GM12878 (cell line): ENCODE measurements at regions of chr3 and their contacts with region 1.

Region 1: GRCh38 chr3:47522082-47522987 is 8.8 kb upstream of the ELP6 start:
- DNase-seq: peak; percentile 69
- ATAC-seq: peak; percentile 99
- H3K4me3 ChIP-seq: no peak overlapping the region
- H3K27ac ChIP-seq: no peak overlapping the region
- H3K4me1 ChIP-seq: peaks cover 6% of the 10 kb centered on the region; the same call in 1 of the 2 replicates
- H3K27me3 ChIP-seq: no peaks in the 10 kb centered on the region; a peak in 1 of 4 replicates
- CTCF ChIP-seq: peak; percentile 84 to 94 (median 85); a peak in 5 of 6 replicates
- EP300 ChIP-seq: no peak
- POLR2A ChIP-seq: no peak
- RAD21 ChIP-seq: peak; percentile 97

Region 2: DNA sequence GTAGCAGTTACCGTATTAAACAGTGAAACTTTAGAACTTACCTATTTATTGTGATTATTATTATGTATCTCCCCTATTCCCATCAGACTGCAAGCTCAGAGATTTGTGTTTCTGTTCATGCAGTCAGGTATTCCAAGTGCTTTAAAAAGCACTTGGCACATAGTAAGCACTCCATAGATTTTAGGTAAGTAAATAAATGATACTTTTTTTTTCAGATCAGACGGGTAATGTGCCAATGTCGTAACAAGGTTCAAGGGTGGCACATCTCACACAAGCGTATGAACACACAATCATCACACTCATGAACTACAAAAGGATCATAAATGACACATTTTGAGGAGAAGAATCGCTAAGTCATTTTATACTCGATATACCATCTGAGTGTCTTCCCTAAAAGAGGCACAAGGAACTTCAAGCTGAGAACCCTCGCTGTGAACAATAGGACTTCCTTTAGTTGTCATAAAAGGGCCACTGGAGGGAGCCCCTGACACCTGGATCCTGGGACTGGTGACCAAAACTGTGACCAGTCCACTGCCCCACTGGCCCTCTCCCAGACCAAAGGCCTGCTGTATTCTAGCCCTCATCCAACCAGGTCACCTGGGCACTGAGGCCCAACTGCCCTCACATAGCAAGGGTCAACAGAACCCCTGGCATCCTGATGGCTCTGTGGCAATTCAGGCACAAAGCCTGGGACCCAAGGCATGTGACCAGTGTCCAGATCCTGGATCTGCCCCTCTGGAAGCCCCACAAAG is 271.9 kb before region 1 on chr3:
- CTCF ChIA-PET with region 1: no interaction called
- POLR2A ChIA-PET with region 1: no interaction called
- RAD21 ChIA-PET with region 1: no interaction called
- SMC1A ChIA-PET with region 1: no interaction called
- in situ Hi-C with region 1: no loop called
- intact Hi-C with region 1: no loop called
- DNase-seq: no peak
- ATAC-seq: peak; percentile 77
- H3K4me3 ChIP-seq: no peak overlapping the region
- H3K27ac ChIP-seq: no peak overlapping the region
- H3K4me1 ChIP-seq: no peaks in the 10 kb centered on the region
- H3K27me3 ChIP-seq: no peaks in the 10 kb centered on the region
- CTCF ChIP-seq: peak; percentile 43 to 59 (median 45); a peak in 5 of 6 replicates
- EP300 ChIP-seq: no peak
- POLR2A ChIP-seq: no peak
- RAD21 ChIP-seq: peak; percentile 51; the same call in 1 of the 2 replicates

Region 3: GRCh38 chr3:47533481-47533880 is 11.1 kb after region 1 on chr3:
- CTCF ChIA-PET with region 1: interaction called, 8 read pairs
- POLR2A ChIA-PET with region 1: no interaction called
- RAD21 ChIA-PET with region 1: interaction called, 7 read pairs
- SMC1A ChIA-PET with region 1: interaction called, 13 read pairs
- in situ Hi-C with region 1: no loop called
- intact Hi-C with region 1: no loop called
- DNase-seq: no peak
- ATAC-seq: peak; percentile 46; the same call in 2 of the 3 replicates
- H3K4me3 ChIP-seq: no peak overlapping the region
- H3K27ac ChIP-seq: no peak overlapping the region
- H3K4me1 ChIP-seq: no peaks in the 10 kb centered on the region
- H3K27me3 ChIP-seq: no peaks in the 10 kb centered on the region
- CTCF ChIP-seq: no peak
- EP300 ChIP-seq: no peak
- POLR2A ChIP-seq: no peak
- RAD21 ChIP-seq: no peak

Region 4: GRCh38 chr3:47652142-47652541 is 129.8 kb after region 1 on chr3:
- CTCF ChIA-PET with region 1: interaction called, 4 read pairs
- POLR2A ChIA-PET with region 1: no interaction called
- RAD21 ChIA-PET with region 1: no interaction called
- SMC1A ChIA-PET with region 1: interaction called, 4 read pairs
- in situ Hi-C with region 1: no loop called
- intact Hi-C with region 1: loop called (anchors 10 kb)
- DNase-seq: no peak
- ATAC-seq: no peak
- H3K4me3 ChIP-seq: no peak overlapping the region
- H3K27ac ChIP-seq: no peak overlapping the region
- H3K4me1 ChIP-seq: no peaks in the 10 kb centered on the region
- H3K27me3 ChIP-seq: no peaks in the 10 kb centered on the region
- CTCF ChIP-seq: no peak
- EP300 ChIP-seq: no peak
- POLR2A ChIP-seq: no peak
- RAD21 ChIP-seq: no peak

Region 5: DNA sequence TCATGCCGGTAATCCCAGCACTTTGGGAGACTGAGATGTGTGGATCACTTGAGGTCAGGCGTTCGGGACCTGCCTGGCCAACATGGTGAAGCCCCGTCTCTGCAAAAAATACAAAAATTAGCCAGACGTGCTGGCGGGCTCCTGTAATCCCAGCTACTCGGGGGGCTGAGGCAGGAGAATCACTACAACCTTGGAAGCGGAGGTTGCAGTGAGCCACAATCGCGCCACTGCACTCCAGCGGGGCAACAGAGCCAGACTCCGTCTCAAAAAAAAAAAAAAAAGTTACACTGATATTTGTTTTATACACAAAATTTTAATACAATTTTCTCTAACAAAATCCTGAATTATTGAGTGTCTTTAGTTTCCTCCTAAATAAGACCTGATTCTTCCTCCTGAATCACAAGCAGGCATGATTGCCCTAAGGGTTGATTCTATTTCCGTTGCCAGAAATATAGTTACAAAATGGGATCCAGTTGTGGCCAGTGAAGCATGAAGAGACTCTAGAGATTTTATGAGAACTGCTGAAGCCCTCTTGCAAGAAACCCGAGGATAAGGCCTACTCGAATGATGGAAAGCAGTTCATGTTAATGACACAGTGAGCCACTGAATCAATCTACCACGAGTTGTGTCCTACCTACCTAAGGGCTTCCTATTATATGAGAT is 269.0 kb after region 1 on chr3:
- CTCF ChIA-PET with region 1: interaction called, 83 read pairs
- POLR2A ChIA-PET with region 1: interaction called, 4 read pairs
- RAD21 ChIA-PET with region 1: interaction called, 43 read pairs
- SMC1A ChIA-PET with region 1: interaction called, 26 read pairs
- in situ Hi-C with region 1: loop called (anchors 5 kb)
- intact Hi-C with region 1: loop called (anchors 1 kb)
- DNase-seq: no peak
- ATAC-seq: no peak
- H3K4me3 ChIP-seq: no peak overlapping the region
- H3K27ac ChIP-seq: no peak overlapping the region
- H3K4me1 ChIP-seq: no peaks in the 10 kb centered on the region
- H3K27me3 ChIP-seq: no peaks in the 10 kb centered on the region
- CTCF ChIP-seq: no peak
- EP300 ChIP-seq: no peak
- POLR2A ChIP-seq: no peak
- RAD21 ChIP-seq: no peak

Region 6: GRCh38 chr3:47824541-47825473 is 302.5 kb after region 1 on chr3:
- CTCF ChIA-PET with region 1: interaction called, 17 read pairs
- POLR2A ChIA-PET with region 1: no interaction called
- RAD21 ChIA-PET with region 1: interaction called, 15 read pairs
- SMC1A ChIA-PET with region 1: interaction called, 5 read pairs
- in situ Hi-C with region 1: no loop called
- intact Hi-C with region 1: no loop called
- DNase-seq: peak; percentile 25
- ATAC-seq: peak; percentile 100
- H3K4me3 ChIP-seq: peak overlapping the region; percentile 98
- H3K27ac ChIP-seq: peak overlapping the region; percentile 85
- H3K4me1 ChIP-seq: peaks cover 6% of the 10 kb centered on the region
- H3K27me3 ChIP-seq: no peaks in the 10 kb centered on the region
- CTCF ChIP-seq: peak; percentile 70 to 92 (median 86); a peak in 5 of 6 replicates
- EP300 ChIP-seq: no peak
- POLR2A ChIP-seq: peak; percentile 95
- RAD21 ChIP-seq: peak; percentile 38; the same call in 1 of the 2 replicates